Gastrocnemius medialis (tissue), 4 donors: ENCODE measurements at regions of chr16 and their contacts with region 1.

Region 1: DNA sequence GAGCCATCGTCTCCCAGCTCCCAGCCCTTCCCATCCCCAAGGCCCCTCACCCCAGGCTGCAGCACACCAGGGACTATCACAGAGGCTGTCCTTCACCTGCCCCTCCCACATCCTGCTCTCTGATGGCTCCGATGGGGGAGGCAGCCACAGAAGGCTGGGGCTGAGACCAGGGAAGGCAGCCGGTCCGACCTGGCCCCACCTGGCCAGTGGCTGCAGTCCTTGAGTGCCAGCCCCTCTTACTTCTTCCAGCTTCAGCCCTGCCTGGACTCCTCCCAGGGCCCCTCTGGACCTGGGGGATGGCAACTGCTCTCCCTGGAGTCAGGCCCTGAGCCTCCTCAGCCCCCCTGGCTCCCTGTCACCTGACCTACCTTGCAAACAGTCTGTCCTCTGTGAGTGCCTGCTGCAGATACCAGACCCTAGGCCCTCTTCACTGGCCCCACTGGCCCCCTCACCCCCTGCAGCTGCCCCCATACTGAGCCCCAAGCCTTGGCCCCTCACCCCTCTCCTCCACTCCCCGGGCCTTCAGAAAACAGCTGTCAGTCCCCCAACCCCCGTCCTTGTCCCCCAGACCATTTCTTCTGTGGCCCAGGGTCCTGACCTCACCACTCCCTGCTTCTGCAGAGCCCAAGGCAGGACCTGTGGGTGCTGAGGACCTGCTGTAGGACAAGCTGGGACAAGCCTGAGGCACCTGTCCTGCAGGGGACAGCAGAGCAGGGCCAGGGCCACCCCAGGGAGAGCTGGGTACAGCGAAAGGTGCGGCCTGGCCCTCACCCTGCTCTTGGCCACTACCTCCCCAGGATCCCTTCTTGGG is 12.6 kb upstream of the SRRM2 start:
- DNase-seq: no peak
- ATAC-seq: no peak
- H3K4me3 ChIP-seq: no peak overlapping the region
- H3K27ac ChIP-seq: no peak overlapping the region
- H3K4me1 ChIP-seq: no peaks in the 10 kb centered on the region
- H3K27me3 ChIP-seq: peaks cover 0 to 3% (median 0%) of the 10 kb centered on the region in 3 donors
- CTCF ChIP-seq: no peak
- POLR2A ChIP-seq: no peak

Region 2: DNA sequence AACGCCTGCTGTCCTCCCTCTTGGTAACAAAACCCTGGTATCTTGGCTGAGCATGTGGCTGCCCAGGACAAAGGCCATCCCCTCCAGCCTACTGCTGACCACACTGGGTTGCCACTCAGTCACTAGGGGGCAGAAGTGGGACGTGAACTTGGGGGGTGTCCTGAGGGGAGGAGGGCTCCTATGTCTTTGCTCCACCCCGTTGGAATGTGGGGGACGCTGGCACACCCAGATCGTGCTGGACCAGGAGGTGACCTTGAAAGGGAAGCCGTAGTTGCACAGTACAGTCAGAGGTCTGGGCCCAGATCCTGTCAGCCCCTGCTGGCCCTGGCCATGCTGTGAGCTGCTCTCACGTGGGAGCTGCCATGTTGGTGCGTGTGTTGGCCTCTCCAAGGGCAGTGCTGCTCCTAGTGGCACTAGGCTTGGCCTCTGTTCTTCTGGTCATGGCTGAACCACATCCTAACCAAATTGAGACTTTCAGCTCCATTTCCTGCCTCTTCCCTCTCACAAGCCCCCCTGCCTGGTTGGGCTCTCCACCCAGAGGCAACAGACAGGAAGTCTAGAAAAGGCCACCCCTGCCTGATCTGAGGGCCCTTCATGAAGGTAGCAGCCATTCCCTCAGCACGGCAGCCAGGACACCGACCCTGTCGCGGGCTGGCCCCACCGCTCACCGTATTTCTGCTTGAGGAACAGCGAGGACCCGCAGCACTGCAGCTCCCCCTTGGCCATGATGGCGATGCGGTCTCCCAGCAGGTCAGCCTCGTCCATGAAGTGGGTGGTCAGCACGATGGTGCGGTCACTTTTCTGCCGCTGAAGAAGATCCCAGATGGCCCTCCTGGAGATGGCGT is 442.9 kb before region 1 on chr16:
- in situ Hi-C with region 1: no loop called
- intact Hi-C with region 1: no loop called
- DNase-seq: peak in 1 of 2 donors; percentile 32
- ATAC-seq: peak in 1 of 2 donors; percentile 44
- H3K4me3 ChIP-seq: no peak overlapping the region
- H3K27ac ChIP-seq: no peak overlapping the region
- H3K4me1 ChIP-seq: no peaks in the 10 kb centered on the region
- H3K27me3 ChIP-seq: no peaks in the 10 kb centered on the region
- CTCF ChIP-seq: peak in 4 of 5 experiments; percentile 20 to 42 (median 30)
- POLR2A ChIP-seq: no peak

Region 3: DNA sequence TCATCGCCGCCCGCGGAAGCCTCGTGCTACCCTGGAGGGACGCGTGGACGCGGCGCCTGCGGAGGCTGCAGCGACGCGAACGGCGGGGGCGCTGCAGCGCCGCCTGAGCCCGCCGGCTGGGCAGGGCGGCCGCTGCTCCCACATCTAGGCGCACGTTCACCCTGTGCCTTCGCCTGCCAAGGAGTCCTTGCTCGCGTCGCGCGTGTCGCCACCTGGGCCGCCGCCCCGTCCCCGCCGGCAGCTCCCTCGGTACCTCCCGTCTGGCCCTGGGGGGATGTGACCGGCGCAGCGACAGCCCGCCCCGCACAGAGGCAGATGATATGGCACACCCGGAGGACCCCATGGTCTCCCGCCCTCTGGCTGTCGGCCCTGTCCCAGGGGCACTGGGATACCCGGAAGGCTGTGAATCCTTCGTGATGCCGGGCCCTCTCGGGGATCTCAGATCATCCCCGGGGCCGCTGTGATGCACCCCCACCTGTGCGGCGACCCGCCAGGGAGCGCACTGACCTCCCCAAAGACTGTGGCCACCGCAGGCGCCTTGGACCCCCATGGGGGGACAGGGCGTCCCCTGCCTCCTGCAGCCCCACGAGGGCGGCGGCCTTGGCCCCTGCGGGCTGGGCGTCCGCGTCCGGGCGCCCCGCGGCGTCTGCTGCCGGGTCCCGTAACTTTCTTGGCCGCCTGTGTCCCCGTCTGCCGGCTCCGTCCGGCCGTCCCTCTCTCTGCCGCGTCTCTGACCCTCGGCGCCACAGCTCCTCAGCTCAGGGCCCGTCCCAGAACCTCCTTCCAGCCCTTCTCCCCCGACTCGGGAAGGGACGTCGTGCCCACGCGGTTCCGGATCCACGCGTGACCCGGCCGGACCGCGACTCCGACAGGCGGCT is 265.6 kb before region 1 on chr16:
- in situ Hi-C with region 1: no loop called
- intact Hi-C with region 1: no loop called
- DNase-seq: no peak
- ATAC-seq: peak; percentile 54 to 59
- H3K4me3 ChIP-seq: peak overlapping the region; percentile 66 to 87 (median 72)
- H3K27ac ChIP-seq: peak overlapping the region; percentile 81 to 91 (median 86)
- H3K4me1 ChIP-seq: peaks cover 17 to 30% of the 10 kb centered on the region in 2 donors
- H3K27me3 ChIP-seq: peaks cover 36 to 38% (median 38%) of the 10 kb centered on the region in 3 donors
- CTCF ChIP-seq: peak in 4 of 5 experiments; percentile 19 to 67 (median 34)
- POLR2A ChIP-seq: peak in 1 of 2 donors; percentile 11

Region 4: DNA sequence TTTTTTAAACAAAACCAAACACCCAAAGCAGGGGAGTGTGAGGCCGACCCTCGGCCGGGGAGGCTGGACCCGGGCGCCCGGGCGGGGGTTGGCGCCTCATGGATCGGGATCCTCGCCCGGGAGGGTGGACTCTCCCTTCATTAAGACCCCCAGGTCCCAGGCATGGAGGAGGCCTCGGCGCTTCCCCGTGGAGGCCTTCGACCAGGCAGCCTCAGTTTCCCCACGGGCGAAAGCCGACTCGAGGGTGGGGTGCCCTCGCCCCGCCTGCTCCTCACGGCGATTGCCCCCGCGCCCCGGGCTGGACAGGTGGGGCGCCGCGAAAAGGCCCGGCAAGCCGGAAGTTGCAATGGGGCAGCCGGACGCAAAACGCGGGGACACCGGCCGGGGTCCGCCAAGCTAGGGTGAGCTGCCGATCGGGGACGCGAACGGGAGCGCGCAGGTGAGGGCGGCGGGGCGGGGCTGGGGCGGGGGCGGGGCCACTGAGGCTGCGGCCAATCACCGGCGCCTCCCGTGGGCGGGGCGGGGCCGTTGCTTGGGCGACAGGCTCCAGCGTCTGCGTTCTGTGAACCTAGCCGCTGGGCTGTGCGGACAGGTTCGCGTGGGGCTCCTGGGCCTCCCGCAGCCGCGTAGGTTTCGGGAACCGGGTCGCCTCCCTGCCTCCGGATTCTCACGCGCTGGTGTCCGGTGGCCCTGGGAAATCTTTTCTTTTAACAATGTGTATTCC is 366.5 kb after region 1 on chr16:
- in situ Hi-C with region 1: no loop called
- intact Hi-C with region 1: no loop called
- DNase-seq: peak; percentile 83
- ATAC-seq: peak; percentile 91 to 96
- H3K4me3 ChIP-seq: peak overlapping the region; percentile 68 to 78 (median 75)
- H3K27ac ChIP-seq: peak overlapping the region; percentile 71 to 89 (median 82)
- H3K4me1 ChIP-seq: peaks cover 11 to 12% of the 10 kb centered on the region in 2 donors
- H3K27me3 ChIP-seq: no peaks in the 10 kb centered on the region
- CTCF ChIP-seq: no peak
- POLR2A ChIP-seq: peak in 1 of 2 donors; percentile 28

Region 5: GRCh38 chr16:4723071-4723767 is 1983.4 kb after region 1 on chr16:
- in situ Hi-C with region 1: no loop called
- intact Hi-C with region 1: loop called (anchors 10 kb)
- DNase-seq: no peak
- ATAC-seq: no peak
- H3K4me3 ChIP-seq: no peak overlapping the region
- H3K27ac ChIP-seq: no peak overlapping the region
- H3K4me1 ChIP-seq: no peaks in the 10 kb centered on the region
- H3K27me3 ChIP-seq: no peaks in the 10 kb centered on the region
- CTCF ChIP-seq: no peak
- POLR2A ChIP-seq: no peak